ENCODE measurements at regions of chr7 and their contacts with region 1.

Region 1: GRCh38 chr7:121372376-121373010 is 23.6 kb downstream of the FAM3C start:
- DNase-seq: no peak
- H3K4me3 Mint-ChIP-seq: no peak overlapping the region
- H3K27ac Mint-ChIP-seq: peak overlapping the region; percentile 41
- H3K4me1 Mint-ChIP-seq: peaks cover 28% of the 10 kb centered on the region
- H3K27me3 Mint-ChIP-seq: no peaks in the 10 kb centered on the region

Region 2: GRCh38 chr7:121385800-121386179 is 13.3 kb after region 1 on chr7:
- CTCF ChIA-PET with region 1: interaction called, 7 read pairs
- intact Hi-C with region 1: loop called (anchors 1 kb)
- DNase-seq: no peak
- H3K4me3 Mint-ChIP-seq: no peak overlapping the region
- H3K27ac Mint-ChIP-seq: no peak overlapping the region
- H3K4me1 Mint-ChIP-seq: peaks cover 67% of the 10 kb centered on the region
- H3K27me3 Mint-ChIP-seq: no peaks in the 10 kb centered on the region

Region 3: DNA sequence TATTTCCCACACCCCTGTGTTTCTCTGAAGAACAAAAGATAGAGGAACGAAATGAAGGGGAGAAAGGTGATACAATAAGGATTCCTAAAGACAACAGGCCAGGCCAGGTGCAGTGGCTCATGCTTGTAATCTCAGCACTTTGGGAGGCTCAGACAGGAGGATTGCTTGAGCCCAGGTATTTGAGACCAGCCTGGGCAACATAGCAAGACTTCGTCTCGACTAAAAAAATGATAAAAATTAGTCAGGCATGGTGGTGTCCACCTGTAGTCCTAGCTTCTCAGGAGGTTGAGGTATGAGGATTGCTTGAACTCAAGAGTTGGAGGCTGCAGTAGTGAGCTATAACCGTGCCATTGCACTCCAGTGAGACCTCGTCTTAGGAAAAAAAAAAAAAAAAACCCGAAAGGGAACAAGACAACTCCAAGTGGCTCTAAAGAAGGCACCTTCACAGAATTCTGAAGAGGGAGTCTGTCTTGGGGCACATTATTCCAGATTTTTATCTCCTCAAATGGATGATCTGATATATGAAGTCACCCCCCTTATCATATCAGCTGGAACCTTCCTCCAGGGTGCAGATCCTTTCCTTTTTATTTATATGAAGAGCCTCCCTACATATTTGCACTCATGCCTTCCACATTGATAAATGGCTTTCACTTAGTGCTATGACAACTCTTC is 65.1 kb after region 1 on chr7:
- CTCF ChIA-PET with region 1: no interaction called
- intact Hi-C with region 1: loop called (anchors 5 kb)
- DNase-seq: no peak
- H3K4me3 Mint-ChIP-seq: no peak overlapping the region
- H3K27ac Mint-ChIP-seq: no peak overlapping the region
- H3K4me1 Mint-ChIP-seq: peaks cover 22% of the 10 kb centered on the region
- H3K27me3 Mint-ChIP-seq: no peaks in the 10 kb centered on the region

Region 4: GRCh38 chr7:121832347-121832746 is 459.9 kb after region 1 on chr7:
- CTCF ChIA-PET with region 1: no interaction called
- intact Hi-C with region 1: no loop called
- DNase-seq: no peak
- H3K4me3 Mint-ChIP-seq: no peak overlapping the region
- H3K27ac Mint-ChIP-seq: no peak overlapping the region
- H3K4me1 Mint-ChIP-seq: no peaks in the 10 kb centered on the region
- H3K27me3 Mint-ChIP-seq: no peaks in the 10 kb centered on the region